ENCODE measurements at regions of chr4 and their contacts with region 1.

Region 1: GRCh38 chr4:56301181-56302076 is 85.9 kb downstream of the AASDH start:
- DNase-seq: peak; percentile 53 to 65
- H3K4me3 ChIP-seq: no peak overlapping the region
- H3K27ac ChIP-seq: no peak overlapping the region
- H3K4me1 ChIP-seq: no peaks in the 10 kb centered on the region
- H3K27me3 ChIP-seq: no peaks in the 10 kb centered on the region
- CTCF ChIP-seq: peak; percentile 82

Region 2: GRCh38 chr4:55920571-55920970 is 380.9 kb before region 1 on chr4:
- CTCF ChIA-PET with region 1: no interaction called
- POLR2A ChIA-PET with region 1: no interaction called
- intact Hi-C with region 1: no loop called
- DNase-seq: no peak
- H3K4me3 ChIP-seq: no peak overlapping the region
- H3K27ac ChIP-seq: no peak overlapping the region
- H3K4me1 ChIP-seq: no peaks in the 10 kb centered on the region
- H3K27me3 ChIP-seq: no peaks in the 10 kb centered on the region
- CTCF ChIP-seq: no peak

Region 3: DNA sequence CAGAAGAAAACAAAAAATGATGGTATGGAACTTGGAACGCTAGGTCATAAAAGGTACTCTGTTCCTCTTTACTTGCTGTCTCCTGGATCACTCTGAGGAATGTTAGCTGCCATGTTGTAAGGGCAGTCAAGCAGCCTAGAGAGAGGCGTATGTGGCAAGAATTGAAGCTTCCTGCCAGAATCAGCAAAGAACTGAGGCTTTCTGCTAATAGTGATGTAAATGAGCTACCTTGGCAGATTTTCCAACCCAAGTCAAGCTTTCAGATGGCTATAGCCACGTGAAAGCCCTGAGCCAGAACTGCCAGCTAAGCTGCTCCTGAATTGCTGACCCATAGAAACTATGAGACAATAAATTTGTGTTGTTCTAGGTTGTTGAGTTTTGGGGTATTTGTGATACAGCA is 47.1 kb after region 1 on chr4:
- CTCF ChIA-PET with region 1: no interaction called
- POLR2A ChIA-PET with region 1: no interaction called
- intact Hi-C with region 1: no loop called
- DNase-seq: no peak
- H3K4me3 ChIP-seq: no peak overlapping the region
- H3K27ac ChIP-seq: no peak overlapping the region
- H3K4me1 ChIP-seq: no peaks in the 10 kb centered on the region
- H3K27me3 ChIP-seq: no peaks in the 10 kb centered on the region
- CTCF ChIP-seq: no peak

Region 4: GRCh38 chr4:56828784-56829535 is 527.5 kb after region 1 on chr4:
- CTCF ChIA-PET with region 1: no interaction called
- POLR2A ChIA-PET with region 1: no interaction called
- intact Hi-C with region 1: loop called (anchors 10 kb)
- DNase-seq: no peak
- H3K4me3 ChIP-seq: no peak overlapping the region
- H3K27ac ChIP-seq: no peak overlapping the region
- H3K4me1 ChIP-seq: no peaks in the 10 kb centered on the region
- H3K27me3 ChIP-seq: no peaks in the 10 kb centered on the region
- CTCF ChIP-seq: no peak